Activated B cell treated with CpG ODN at 0.5 μM for 24 hours (primary cell): ENCODE measurements at regions of chr10 and their contacts with region 1.

Region 1: GRCh38 chr10:95290461-95291364 is at the start of gene PDLIM1:
- DNase-seq: peak; percentile 81
- ATAC-seq: peak; percentile 73
- H3K4me3 Mint-ChIP-seq: peak within 1 kb of the TSS; percentile 90
- H3K27ac Mint-ChIP-seq: peak within 1 kb of the TSS; percentile 95
- H3K4me1 Mint-ChIP-seq: peaks cover 87% of the 10 kb centered on the region
- H3K27me3 Mint-ChIP-seq: no peaks in the 10 kb centered on the region
- CTCF ChIP-seq: no peak
- total RNA-seq, gene PDLIM1: 141 and 149 TPM in 2 replicates

Region 2: GRCh38 chr10:95229724-95230627 is 60.7 kb before region 1 on chr10:
- CTCF ChIA-PET with region 1: no interaction called
- POLR2A ChIA-PET with region 1: interaction called, 3 read pairs
- intact Hi-C with region 1: loop called (anchors 2 kb)
- DNase-seq: no peak
- ATAC-seq: no peak
- H3K4me3 Mint-ChIP-seq: peak overlapping the region; percentile 91
- H3K27ac Mint-ChIP-seq: peak overlapping the region; percentile 86
- H3K4me1 Mint-ChIP-seq: peaks cover 15% of the 10 kb centered on the region
- H3K27me3 Mint-ChIP-seq: no peaks in the 10 kb centered on the region
- CTCF ChIP-seq: no peak

Region 3: DNA sequence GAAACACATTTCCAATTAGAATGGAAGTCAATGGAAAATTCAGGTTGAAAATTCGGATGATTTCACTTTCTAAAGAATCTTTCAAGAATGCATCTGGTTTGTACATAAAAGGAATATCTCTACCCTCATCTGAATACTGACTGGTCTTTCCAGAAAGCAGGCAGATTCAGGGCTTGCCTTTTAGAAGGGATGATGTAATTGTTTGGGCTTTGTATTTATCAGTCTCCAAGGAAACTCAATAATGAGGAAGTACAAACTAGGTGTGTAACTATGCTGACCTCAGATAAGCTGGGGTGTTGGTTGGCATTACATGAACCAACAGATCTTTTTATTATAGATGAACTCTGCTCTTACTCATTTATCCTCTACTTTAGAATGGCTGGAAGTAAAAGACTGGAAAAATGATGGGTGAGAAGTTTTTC is 24.0 kb before region 1 on chr10:
- CTCF ChIA-PET with region 1: interaction called, 3 read pairs
- POLR2A ChIA-PET with region 1: interaction called, 8 read pairs
- intact Hi-C with region 1: loop called (anchors 1 kb)
- DNase-seq: no peak
- ATAC-seq: peak; percentile 80
- H3K4me3 Mint-ChIP-seq: peak overlapping the region; percentile 2
- H3K27ac Mint-ChIP-seq: peak overlapping the region; percentile 83
- H3K4me1 Mint-ChIP-seq: peaks cover 56% of the 10 kb centered on the region
- H3K27me3 Mint-ChIP-seq: no peaks in the 10 kb centered on the region
- CTCF ChIP-seq: no peak

Region 4: DNA sequence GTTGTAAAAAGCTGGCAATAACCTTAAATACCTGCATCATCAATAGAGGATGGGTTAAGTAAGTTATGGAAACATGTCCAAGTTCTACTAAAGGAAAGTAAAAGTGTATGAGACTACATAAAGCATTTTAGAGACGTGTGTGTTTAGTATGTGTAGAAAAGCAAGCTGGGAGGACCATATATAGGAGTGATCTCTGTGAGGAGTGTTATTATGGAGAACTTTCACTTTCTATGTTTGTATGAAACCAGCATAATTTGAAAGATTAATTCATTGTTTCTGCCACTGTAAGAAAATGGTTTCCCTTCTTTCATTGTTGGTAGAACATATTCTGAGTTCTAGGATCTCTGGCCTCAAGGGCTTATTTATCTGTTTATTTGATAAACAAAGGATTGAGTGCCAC is 19.2 kb after region 1 on chr10:
- CTCF ChIA-PET with region 1: no interaction called
- POLR2A ChIA-PET with region 1: interaction called, 14 read pairs
- intact Hi-C with region 1: loop called (anchors 2 kb)
- DNase-seq: no peak
- ATAC-seq: peak; percentile 56
- H3K4me3 Mint-ChIP-seq: peak overlapping the region; percentile 60
- H3K27ac Mint-ChIP-seq: peak overlapping the region; percentile 76
- H3K4me1 Mint-ChIP-seq: peaks cover 31% of the 10 kb centered on the region
- H3K27me3 Mint-ChIP-seq: no peaks in the 10 kb centered on the region
- CTCF ChIP-seq: no peak

Region 5: GRCh38 chr10:95561182-95562075 is 270.7 kb after region 1 on chr10 and contains the start of gene SORBS1:
- CTCF ChIA-PET with region 1: no interaction called
- POLR2A ChIA-PET with region 1: no interaction called
- intact Hi-C with region 1: loop called (anchors 5 kb)
- DNase-seq: peak; percentile 83
- ATAC-seq: peak; percentile 98
- H3K4me3 Mint-ChIP-seq: peak within 1 kb of the TSS; percentile 98
- H3K27ac Mint-ChIP-seq: peak within 1 kb of the TSS; percentile 73
- H3K4me1 Mint-ChIP-seq: peaks cover 10% of the 10 kb centered on the region
- H3K27me3 Mint-ChIP-seq: peaks cover 17% of the 10 kb centered on the region
- CTCF ChIP-seq: no peak
- total RNA-seq, gene SORBS1: 0.37 and 0.42 TPM in 2 replicates